ENCODE measurements at regions of chr18 and their contacts with region 1.

Region 1: DNA sequence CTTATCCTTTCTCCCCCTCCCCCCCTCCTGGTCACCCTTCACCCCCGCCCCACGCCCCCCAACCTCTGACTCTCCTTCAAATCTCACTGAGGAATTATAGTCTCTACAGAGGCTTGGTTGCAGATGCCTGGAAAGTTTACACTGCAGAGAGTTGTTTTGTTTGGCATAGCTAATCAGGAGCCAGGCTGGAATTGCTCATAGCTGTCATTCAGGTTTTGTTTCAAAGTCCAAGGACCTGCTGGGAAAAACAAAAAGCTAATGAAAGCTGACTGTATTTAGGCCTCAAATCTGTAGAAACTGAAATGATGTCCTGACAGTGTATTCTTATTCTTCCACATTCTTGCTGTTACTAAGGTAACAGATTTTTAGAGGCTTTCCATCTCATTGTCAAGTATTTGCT is 22.6 kb downstream of the GREB1L start:
- DNase-seq: no peak
- ATAC-seq: no peak
- H3K4me3 ChIP-seq: no peak overlapping the region
- H3K27ac ChIP-seq: no peak overlapping the region
- H3K4me1 ChIP-seq: peaks cover 3 to 18% of the 10 kb centered on the region in 2 experiments; a peak in 3 of 4 replicates
- H3K27me3 ChIP-seq: no peaks in the 10 kb centered on the region
- CTCF ChIP-seq: no peak
- POLR2A ChIP-seq: no peak
- RAD21 ChIP-seq: no peak

Region 2: GRCh38 chr18:21218630-21219261 is 45.9 kb before region 1 on chr18:
- CTCF ChIA-PET with region 1: no interaction called
- POLR2A ChIA-PET with region 1: no interaction called
- RAD21 ChIA-PET with region 1: no interaction called
- intact Hi-C with region 1: loop called (anchors 5 kb)
- DNase-seq: no peak
- ATAC-seq: no peak
- H3K4me3 ChIP-seq: no peak overlapping the region
- H3K27ac ChIP-seq: no peak overlapping the region
- H3K4me1 ChIP-seq: no peaks in the 10 kb centered on the region
- H3K27me3 ChIP-seq: no peaks in the 10 kb centered on the region
- CTCF ChIP-seq: no peak
- POLR2A ChIP-seq: no peak
- RAD21 ChIP-seq: no peak

Region 3: DNA sequence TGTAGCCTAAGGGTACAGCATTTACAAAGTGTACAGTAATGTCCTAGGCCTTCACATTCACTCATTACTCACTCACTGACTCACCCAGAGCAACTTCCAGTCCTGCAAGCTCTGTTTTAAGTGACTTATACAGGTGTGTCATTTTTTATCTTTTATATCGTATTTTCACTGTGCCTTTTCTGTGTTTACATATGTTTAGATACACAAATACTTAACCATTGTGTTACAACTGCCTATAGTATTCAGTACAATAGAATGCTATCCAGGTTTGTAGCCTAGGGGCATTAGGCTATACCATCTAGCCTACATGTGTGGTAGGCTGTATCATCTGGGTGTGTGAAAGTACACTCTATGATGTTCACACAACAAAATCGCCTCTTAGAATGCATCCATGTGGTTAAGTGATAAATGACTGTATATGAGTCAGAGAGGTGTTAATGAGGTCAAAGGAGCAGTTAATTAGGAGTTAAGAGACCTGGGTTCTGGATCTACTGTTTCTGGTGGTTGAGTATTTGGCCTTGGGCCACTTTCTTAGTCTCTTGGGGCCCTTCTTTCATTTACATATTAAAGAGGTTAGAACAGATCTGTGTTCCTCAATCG is 126.5 kb after region 1 on chr18:
- CTCF ChIA-PET with region 1: no interaction called
- POLR2A ChIA-PET with region 1: no interaction called
- RAD21 ChIA-PET with region 1: no interaction called
- intact Hi-C with region 1: loop called (anchors 10 kb)
- DNase-seq: peak; percentile 89
- ATAC-seq: peak; percentile 93
- H3K4me3 ChIP-seq: peak overlapping the region in 1 of 2 experiments; percentile 35; a peak in 1 of 4 replicates
- H3K27ac ChIP-seq: peak overlapping the region; percentile 54; the same call in 1 of the 2 replicates
- H3K4me1 ChIP-seq: peaks cover 8 to 37% of the 10 kb centered on the region in 2 experiments
- H3K27me3 ChIP-seq: no peaks in the 10 kb centered on the region
- CTCF ChIP-seq: no peak
- POLR2A ChIP-seq: no peak
- RAD21 ChIP-seq: no peak